Activated CD8-positive, alpha-beta T cell treated with anti-CD3 and anti-CD28 coated beads for 36 hours (primary cell): ENCODE measurements at regions of chr2 and their contacts with region 1.

Region 1: DNA sequence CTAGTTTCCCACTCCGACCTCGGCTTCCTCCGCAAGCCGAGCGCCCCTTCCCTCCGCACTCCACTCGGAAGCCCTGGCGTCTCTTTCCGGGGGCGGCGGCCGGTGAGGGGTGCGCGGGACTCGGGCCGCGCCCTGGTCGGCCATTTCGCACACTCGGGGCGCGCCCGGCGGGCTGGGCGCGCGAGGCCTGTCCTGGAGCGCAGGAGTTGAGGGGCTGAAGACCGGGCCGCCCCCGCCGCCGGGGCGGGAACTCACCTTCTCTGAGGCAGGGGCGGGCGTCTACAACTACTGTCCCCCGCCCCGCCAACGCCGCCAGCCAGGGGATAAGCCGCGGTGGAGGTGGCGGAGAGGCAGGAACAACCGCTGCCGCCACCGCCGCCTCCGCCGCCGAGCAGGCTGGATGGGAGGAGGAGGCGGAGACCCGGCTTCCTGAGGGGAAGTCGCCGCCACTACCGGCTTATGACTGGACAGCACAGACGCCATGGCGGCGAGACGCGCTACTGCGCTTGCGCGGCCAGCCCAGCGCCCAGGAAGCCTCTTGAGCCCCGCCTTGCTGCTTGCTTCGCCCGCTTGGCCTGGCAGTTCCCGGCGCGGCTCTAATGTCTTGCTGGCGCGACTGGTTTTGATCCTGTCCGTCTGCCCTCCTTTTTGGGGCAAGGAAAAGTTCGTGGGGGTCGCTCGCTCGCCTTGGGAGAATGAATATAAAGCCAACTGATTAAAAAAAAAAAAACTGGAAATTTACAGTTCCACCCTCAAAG is at the start of gene KRCC1:
- DNase-seq: peak; percentile 94
- ATAC-seq: peak; percentile 90
- H3K4me3 Mint-ChIP-seq: peak within 1 kb of the TSS; percentile 95
- H3K27ac Mint-ChIP-seq: peak within 1 kb of the TSS; percentile 98
- H3K4me1 Mint-ChIP-seq: peaks cover 66% of the 10 kb centered on the region
- H3K27me3 Mint-ChIP-seq: no peaks in the 10 kb centered on the region
- CTCF ChIP-seq: no peak
- total RNA-seq, gene KRCC1: 10.8 to 11.1 TPM

Region 2: GRCh38 chr2:88003074-88003755 is 52.3 kb before region 1 on chr2:
- CTCF ChIA-PET with region 1: interaction called, 10 read pairs
- POLR2A ChIA-PET with region 1: no interaction called
- intact Hi-C with region 1: no loop called
- DNase-seq: no peak
- ATAC-seq: no peak
- H3K4me3 Mint-ChIP-seq: no peak overlapping the region
- H3K27ac Mint-ChIP-seq: no peak overlapping the region
- H3K4me1 Mint-ChIP-seq: peaks cover 7% of the 10 kb centered on the region
- H3K27me3 Mint-ChIP-seq: peaks cover 2% of the 10 kb centered on the region
- CTCF ChIP-seq: no peak

Region 3: DNA sequence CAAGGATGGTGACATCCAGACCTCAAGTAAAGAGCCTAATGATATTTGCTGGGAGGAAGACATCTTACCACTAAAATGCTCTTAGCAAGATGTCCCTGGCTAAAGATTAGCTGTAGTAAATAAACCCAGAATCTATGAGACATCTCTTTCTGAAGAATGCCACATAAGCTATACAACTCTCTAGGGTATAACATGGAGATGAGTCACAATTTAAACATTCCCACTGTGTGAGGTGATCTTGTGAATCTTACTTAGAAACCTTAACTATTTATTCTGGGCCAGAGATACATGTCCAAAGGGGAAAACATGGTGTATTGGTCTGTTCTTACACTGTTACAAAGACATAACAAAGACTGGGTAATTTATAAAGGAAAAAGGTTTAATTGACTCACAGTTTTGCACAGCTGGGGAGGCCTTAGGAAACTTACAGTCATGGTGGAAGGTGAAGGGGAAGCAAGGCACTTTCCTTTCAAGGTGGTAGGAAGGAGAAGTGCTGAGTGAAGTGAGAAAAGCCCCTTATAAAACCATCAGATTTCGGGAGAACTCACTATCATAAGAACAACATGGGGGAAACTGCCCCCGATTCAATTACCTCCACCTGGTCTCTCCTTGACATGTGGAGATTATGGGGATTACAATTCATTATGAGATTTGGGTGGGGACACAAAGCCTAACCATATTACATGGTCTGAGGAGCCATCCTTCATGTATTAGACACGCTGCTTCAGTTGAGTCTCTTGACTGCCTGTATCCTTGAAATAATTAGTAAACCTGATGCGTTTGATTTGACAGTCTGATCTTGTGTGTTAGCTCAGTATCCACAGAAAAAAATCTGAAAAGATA is 17.1 kb before region 1 on chr2:
- CTCF ChIA-PET with region 1: interaction called, 33 read pairs
- POLR2A ChIA-PET with region 1: interaction called, 3 read pairs
- intact Hi-C with region 1: no loop called
- DNase-seq: no peak
- ATAC-seq: peak; percentile 84
- H3K4me3 Mint-ChIP-seq: no peak overlapping the region
- H3K27ac Mint-ChIP-seq: peak overlapping the region; percentile 65
- H3K4me1 Mint-ChIP-seq: peaks cover 42% of the 10 kb centered on the region
- H3K27me3 Mint-ChIP-seq: no peaks in the 10 kb centered on the region
- CTCF ChIP-seq: no peak

Region 4: GRCh38 chr2:88090446-88091283 is 35.1 kb after region 1 on chr2:
- CTCF ChIA-PET with region 1: interaction called, 25 read pairs
- POLR2A ChIA-PET with region 1: no interaction called
- intact Hi-C with region 1: no loop called
- DNase-seq: peak; percentile 66
- ATAC-seq: peak; percentile 90
- H3K4me3 Mint-ChIP-seq: peak overlapping the region; percentile 4
- H3K27ac Mint-ChIP-seq: peak overlapping the region; percentile 86
- H3K4me1 Mint-ChIP-seq: peaks cover 19% of the 10 kb centered on the region
- H3K27me3 Mint-ChIP-seq: no peaks in the 10 kb centered on the region
- CTCF ChIP-seq: no peak

Region 5: GRCh38 chr2:88144914-88145497 is 89.5 kb after region 1 on chr2:
- CTCF ChIA-PET with region 1: interaction called, 17 read pairs
- POLR2A ChIA-PET with region 1: no interaction called
- intact Hi-C with region 1: no loop called
- DNase-seq: no peak
- ATAC-seq: no peak
- H3K4me3 Mint-ChIP-seq: no peak overlapping the region
- H3K27ac Mint-ChIP-seq: no peak overlapping the region
- H3K4me1 Mint-ChIP-seq: no peaks in the 10 kb centered on the region
- H3K27me3 Mint-ChIP-seq: peaks cover 21% of the 10 kb centered on the region
- CTCF ChIP-seq: no peak

Region 6: GRCh38 chr2:88170472-88170892 is 114.9 kb after region 1 on chr2:
- CTCF ChIA-PET with region 1: interaction called, 23 read pairs
- POLR2A ChIA-PET with region 1: no interaction called
- intact Hi-C with region 1: no loop called
- DNase-seq: no peak
- ATAC-seq: no peak
- H3K4me3 Mint-ChIP-seq: peak overlapping the region; percentile 46
- H3K27ac Mint-ChIP-seq: no peak overlapping the region
- H3K4me1 Mint-ChIP-seq: peaks cover 2% of the 10 kb centered on the region
- H3K27me3 Mint-ChIP-seq: peaks cover 12% of the 10 kb centered on the region
- CTCF ChIP-seq: no peak

Region 7: DNA sequence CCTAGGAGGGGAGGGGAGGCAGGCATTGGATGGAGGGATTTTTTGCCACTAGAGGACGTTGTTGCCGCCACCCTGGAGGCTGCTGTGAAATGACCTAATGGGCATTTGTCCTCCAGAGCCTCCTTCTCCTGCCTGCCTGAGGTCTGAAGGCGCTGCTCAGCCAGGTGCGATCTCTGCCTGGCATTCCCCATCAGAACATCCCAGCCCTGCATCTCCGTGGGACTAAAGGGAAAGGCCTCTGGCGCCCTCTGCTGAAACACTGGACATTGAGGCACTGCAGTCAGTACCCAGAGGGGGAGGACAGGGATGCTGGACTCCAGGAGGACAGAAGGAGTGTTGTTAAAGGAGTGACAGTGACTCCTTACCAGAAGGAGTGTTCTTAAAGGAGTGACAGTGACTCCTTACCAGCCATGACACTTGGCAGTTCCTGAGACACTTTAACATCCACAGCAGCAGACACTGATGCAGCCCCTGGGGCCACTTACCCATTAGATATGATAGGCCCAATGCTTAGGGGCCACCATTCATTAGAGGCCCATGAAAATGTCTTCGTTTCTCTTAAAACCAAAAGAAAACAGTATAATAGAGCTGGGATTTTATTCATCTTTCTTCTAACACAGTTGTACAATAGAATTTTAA is 131.6 kb after region 1 on chr2:
- CTCF ChIA-PET with region 1: interaction called, 23 read pairs
- POLR2A ChIA-PET with region 1: no interaction called
- intact Hi-C with region 1: no loop called
- DNase-seq: peak; percentile 72
- ATAC-seq: peak; percentile 46
- H3K4me3 Mint-ChIP-seq: no peak overlapping the region
- H3K27ac Mint-ChIP-seq: no peak overlapping the region
- H3K4me1 Mint-ChIP-seq: peaks cover 4% of the 10 kb centered on the region
- H3K27me3 Mint-ChIP-seq: peaks cover 10% of the 10 kb centered on the region
- CTCF ChIP-seq: no peak

Region 8: DNA sequence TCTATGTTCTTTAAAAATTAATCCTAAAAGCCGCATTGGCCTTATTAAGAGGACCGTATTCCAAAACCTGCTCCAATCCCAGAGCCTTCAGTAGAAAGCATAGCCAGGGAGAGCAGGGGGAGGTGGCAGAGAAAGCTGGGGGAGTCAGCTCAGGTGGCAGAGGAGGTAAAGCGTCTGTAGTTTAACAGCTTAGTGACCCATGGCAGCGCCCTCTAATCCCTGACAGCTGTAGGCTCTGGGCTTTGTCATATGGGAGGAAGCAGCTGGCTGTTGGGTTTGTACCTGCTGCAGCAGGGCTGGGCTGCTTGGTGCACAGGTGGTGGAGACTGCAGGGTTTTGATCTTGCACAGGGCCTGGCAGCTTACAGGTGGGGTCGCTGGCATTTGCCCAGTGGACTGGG is 165.2 kb after region 1 on chr2:
- CTCF ChIA-PET with region 1: no interaction called
- POLR2A ChIA-PET with region 1: no interaction called
- intact Hi-C with region 1: no loop called
- DNase-seq: no peak
- ATAC-seq: no peak
- H3K4me3 Mint-ChIP-seq: no peak overlapping the region
- H3K27ac Mint-ChIP-seq: no peak overlapping the region
- H3K4me1 Mint-ChIP-seq: no peaks in the 10 kb centered on the region
- H3K27me3 Mint-ChIP-seq: peaks cover 5% of the 10 kb centered on the region
- CTCF ChIP-seq: no peak

Region 9: GRCh38 chr2:88265349-88266303 is 210.1 kb after region 1 on chr2:
- CTCF ChIA-PET with region 1: no interaction called
- POLR2A ChIA-PET with region 1: no interaction called
- intact Hi-C with region 1: no loop called
- DNase-seq: peak; percentile 56
- ATAC-seq: peak; percentile 98
- H3K4me3 Mint-ChIP-seq: no peak overlapping the region
- H3K27ac Mint-ChIP-seq: peak overlapping the region; percentile 66
- H3K4me1 Mint-ChIP-seq: peaks cover 6% of the 10 kb centered on the region
- H3K27me3 Mint-ChIP-seq: peaks cover 11% of the 10 kb centered on the region
- CTCF ChIP-seq: no peak

Region 10: DNA sequence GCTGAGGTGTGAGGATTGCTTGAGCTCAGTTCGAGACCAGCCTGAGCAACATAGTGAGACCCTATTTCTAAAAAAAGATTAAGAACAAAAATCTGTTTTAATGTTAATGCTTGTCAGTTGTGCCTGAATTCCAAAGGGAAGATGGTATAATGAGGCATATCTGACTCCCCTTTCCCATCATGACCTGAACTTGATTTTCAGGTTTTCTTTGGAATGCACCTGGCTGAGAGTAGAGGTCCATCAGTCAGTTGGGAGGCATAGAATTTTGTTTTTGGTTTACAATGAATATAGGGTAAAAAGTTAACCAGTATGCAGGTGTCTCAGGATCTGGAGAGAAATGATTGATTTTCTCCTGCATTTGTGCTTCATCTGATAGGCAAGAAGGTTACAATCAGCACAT is 656.4 kb after region 1 on chr2:
- CTCF ChIA-PET with region 1: no interaction called
- POLR2A ChIA-PET with region 1: no interaction called
- intact Hi-C with region 1: no loop called
- DNase-seq: no peak
- ATAC-seq: no peak
- H3K4me3 Mint-ChIP-seq: no peak overlapping the region
- H3K27ac Mint-ChIP-seq: no peak overlapping the region
- H3K4me1 Mint-ChIP-seq: peaks cover 9% of the 10 kb centered on the region
- H3K27me3 Mint-ChIP-seq: no peaks in the 10 kb centered on the region
- CTCF ChIP-seq: no peak